Activated CD8-positive, alpha-beta T cell treated with anti-CD3 and anti-CD28 coated beads, Interleukin-2, amount 10 ng/mL, durations not matched to agents 7 days and 5 days (primary cell): ENCODE measurements at regions of chr3 and their contacts with region 1.

Region 1: GRCh38 chr3:10192953-10193691 is 28.4 kb downstream of the IRAK2 start:
- DNase-seq: peak; percentile 70
- ATAC-seq: no peak
- H3K4me3 Mint-ChIP-seq: peak overlapping the region; percentile 53
- H3K27ac Mint-ChIP-seq: peak overlapping the region; percentile 97
- H3K4me1 Mint-ChIP-seq: peaks cover 81% of the 10 kb centered on the region
- H3K27me3 Mint-ChIP-seq: no peaks in the 10 kb centered on the region

Region 2: GRCh38 chr3:10219737-10220136 is 26.6 kb after region 1 on chr3:
- CTCF ChIA-PET with region 1: interaction called, 14 read pairs
- POLR2A ChIA-PET with region 1: interaction called, 22 read pairs
- DNase-seq: no peak
- ATAC-seq: no peak
- H3K4me3 Mint-ChIP-seq: no peak overlapping the region
- H3K27ac Mint-ChIP-seq: peak overlapping the region; percentile 14
- H3K4me1 Mint-ChIP-seq: peaks cover 50% of the 10 kb centered on the region
- H3K27me3 Mint-ChIP-seq: no peaks in the 10 kb centered on the region

Region 3: DNA sequence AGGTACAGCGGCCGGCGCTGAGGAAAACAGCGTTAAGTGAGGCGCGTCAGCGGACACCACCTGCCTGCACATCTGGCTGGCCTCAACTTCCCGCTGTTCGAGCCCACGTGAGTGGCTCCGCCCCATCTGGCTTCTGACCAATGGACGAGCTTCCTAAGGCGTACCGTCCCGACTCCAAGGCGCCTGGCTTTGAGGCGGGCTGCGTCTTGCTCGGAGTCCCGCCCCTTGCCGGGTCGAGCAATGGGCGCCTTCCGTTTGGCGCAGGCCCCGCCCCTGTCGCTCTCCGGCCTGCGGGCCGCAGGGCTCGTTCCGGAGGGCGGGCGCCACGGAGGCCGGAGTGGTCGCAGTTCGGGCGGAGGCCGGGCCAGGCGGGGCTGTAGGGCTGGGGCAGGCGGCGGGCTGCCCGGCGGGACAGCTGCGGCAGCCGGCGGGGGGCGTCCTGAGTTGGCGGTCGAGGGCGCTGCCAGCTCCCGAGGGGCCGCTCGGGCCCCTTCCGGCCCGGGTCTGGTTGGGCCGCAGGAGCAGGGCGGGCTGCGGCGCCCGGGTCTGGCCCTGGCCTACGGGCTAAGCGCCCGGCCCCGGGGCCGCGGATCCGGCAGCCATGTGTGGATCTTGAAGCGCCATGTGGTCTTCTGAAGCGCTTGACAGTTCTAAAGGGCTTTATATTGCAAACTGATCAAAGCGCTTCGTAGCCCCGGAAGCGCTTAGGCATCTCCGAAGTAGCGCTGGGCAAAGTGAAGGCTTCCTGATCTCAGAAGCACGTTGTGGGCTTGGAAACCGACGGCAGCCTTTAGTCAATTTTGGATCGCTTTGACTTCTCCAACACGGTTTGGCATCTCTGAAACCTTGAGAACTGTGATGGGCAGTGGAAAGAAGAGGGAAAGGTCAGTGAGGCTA is 55.3 kb after region 1 on chr3 and contains the start of gene TATDN2:
- CTCF ChIA-PET with region 1: no interaction called
- POLR2A ChIA-PET with region 1: interaction called, 11 read pairs
- DNase-seq: peak; percentile 97
- ATAC-seq: peak; percentile 94
- H3K4me3 Mint-ChIP-seq: peak within 1 kb of the TSS; percentile 89
- H3K27ac Mint-ChIP-seq: peak within 1 kb of the TSS; percentile 95
- H3K4me1 Mint-ChIP-seq: peaks cover 41% of the 10 kb centered on the region
- H3K27me3 Mint-ChIP-seq: no peaks in the 10 kb centered on the region
- total RNA-seq, gene TATDN2: 57.0 to 61.6 TPM

Region 4: DNA sequence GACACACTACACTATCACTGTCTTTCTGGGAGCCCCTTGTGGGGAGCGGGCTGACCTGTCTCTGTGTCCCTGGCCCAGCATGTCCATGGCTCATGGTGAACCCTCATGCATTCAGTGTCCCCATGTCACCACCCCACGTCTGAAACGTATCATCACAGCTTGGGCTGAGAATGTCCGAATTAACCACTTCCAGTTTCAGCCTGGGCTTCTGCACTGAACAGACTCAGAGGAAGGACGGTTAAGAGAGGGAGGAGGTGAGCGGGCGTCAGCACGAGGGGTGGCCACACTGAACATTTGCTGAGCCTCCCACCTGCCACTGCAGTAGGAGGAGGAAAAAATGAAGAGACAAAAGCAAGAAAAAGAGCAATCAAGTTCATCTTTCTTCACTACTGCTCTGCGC is 281.7 kb after region 1 on chr3:
- CTCF ChIA-PET with region 1: no interaction called
- POLR2A ChIA-PET with region 1: no interaction called
- DNase-seq: no peak
- ATAC-seq: no peak
- H3K4me3 Mint-ChIP-seq: no peak overlapping the region
- H3K27ac Mint-ChIP-seq: no peak overlapping the region
- H3K4me1 Mint-ChIP-seq: no peaks in the 10 kb centered on the region
- H3K27me3 Mint-ChIP-seq: peaks cover 10% of the 10 kb centered on the region

Region 5: GRCh38 chr3:10602769-10603768 is 409.9 kb after region 1 on chr3:
- CTCF ChIA-PET with region 1: no interaction called
- POLR2A ChIA-PET with region 1: no interaction called
- DNase-seq: peak; percentile 85
- ATAC-seq: peak; percentile 99
- H3K4me3 Mint-ChIP-seq: peak overlapping the region; percentile 44
- H3K27ac Mint-ChIP-seq: peak overlapping the region; percentile 60
- H3K4me1 Mint-ChIP-seq: peaks cover 31% of the 10 kb centered on the region
- H3K27me3 Mint-ChIP-seq: peaks cover 34% of the 10 kb centered on the region